Caco-2 (cell line): ENCODE measurements at regions of chr1 and their contacts with region 1.

Region 1: GRCh38 chr1:184051485-184052193 is at the start of gene TSEN15:
- DNase-seq: peak; percentile 88 to 89
- H3K4me3 ChIP-seq: peak within 1 kb of the TSS; percentile 86
- H3K4me3 Mint-ChIP-seq: peak within 1 kb of the TSS; percentile 88
- H3K27ac Mint-ChIP-seq: peak within 1 kb of the TSS; percentile 100
- H3K4me1 ChIP-seq: peaks cover 19% of the 10 kb centered on the region
- H3K4me1 Mint-ChIP-seq: peaks cover 31% of the 10 kb centered on the region
- H3K27me3 ChIP-seq: no peaks in the 10 kb centered on the region
- H3K27me3 Mint-ChIP-seq: no peaks in the 10 kb centered on the region
- CTCF ChIP-seq: no peak
- total RNA-seq, gene TSEN15: 62.7 and 71.4 TPM in 2 replicates

Region 2: GRCh38 chr1:183635606-183636333 is 415.9 kb before region 1 on chr1 and contains the start of gene ARPC5:
- CTCF ChIA-PET with region 1: interaction called, 3 read pairs
- POLR2A ChIA-PET with region 1: interaction called, 3 read pairs
- intact Hi-C with region 1: loop called (anchors 10 kb)
- DNase-seq: peak; percentile 96 to 97
- H3K4me3 ChIP-seq: peak within 1 kb of the TSS; percentile 78
- H3K4me3 Mint-ChIP-seq: peak within 1 kb of the TSS; percentile 91
- H3K27ac Mint-ChIP-seq: peak within 1 kb of the TSS; percentile 90
- H3K4me1 ChIP-seq: peaks cover 41% of the 10 kb centered on the region
- H3K4me1 Mint-ChIP-seq: peaks cover 16% of the 10 kb centered on the region
- H3K27me3 ChIP-seq: no peaks in the 10 kb centered on the region
- H3K27me3 Mint-ChIP-seq: no peaks in the 10 kb centered on the region
- CTCF ChIP-seq: no peak
- total RNA-seq, gene ARPC5: 123 and 135 TPM in 2 replicates

Region 3: GRCh38 chr1:183783342-183783741 is 268.3 kb before region 1 on chr1:
- CTCF ChIA-PET with region 1: no interaction called
- POLR2A ChIA-PET with region 1: no interaction called
- intact Hi-C with region 1: no loop called
- DNase-seq: no peak
- H3K4me3 ChIP-seq: no peak overlapping the region
- H3K4me3 Mint-ChIP-seq: no peak overlapping the region
- H3K27ac Mint-ChIP-seq: no peak overlapping the region
- H3K4me1 ChIP-seq: no peaks in the 10 kb centered on the region
- H3K4me1 Mint-ChIP-seq: peaks cover 25% of the 10 kb centered on the region
- H3K27me3 ChIP-seq: no peaks in the 10 kb centered on the region
- H3K27me3 Mint-ChIP-seq: no peaks in the 10 kb centered on the region
- CTCF ChIP-seq: no peak

Region 4: GRCh38 chr1:183821889-183822611 is 229.6 kb before region 1 on chr1:
- CTCF ChIA-PET with region 1: no interaction called
- POLR2A ChIA-PET with region 1: no interaction called
- intact Hi-C with region 1: loop called (anchors 10 kb)
- DNase-seq: no peak
- H3K4me3 ChIP-seq: no peak overlapping the region
- H3K4me3 Mint-ChIP-seq: no peak overlapping the region
- H3K27ac Mint-ChIP-seq: no peak overlapping the region
- H3K4me1 ChIP-seq: peaks cover 26% of the 10 kb centered on the region
- H3K4me1 Mint-ChIP-seq: peaks cover 22% of the 10 kb centered on the region
- H3K27me3 ChIP-seq: no peaks in the 10 kb centered on the region
- H3K27me3 Mint-ChIP-seq: no peaks in the 10 kb centered on the region
- CTCF ChIP-seq: no peak

Region 5: DNA sequence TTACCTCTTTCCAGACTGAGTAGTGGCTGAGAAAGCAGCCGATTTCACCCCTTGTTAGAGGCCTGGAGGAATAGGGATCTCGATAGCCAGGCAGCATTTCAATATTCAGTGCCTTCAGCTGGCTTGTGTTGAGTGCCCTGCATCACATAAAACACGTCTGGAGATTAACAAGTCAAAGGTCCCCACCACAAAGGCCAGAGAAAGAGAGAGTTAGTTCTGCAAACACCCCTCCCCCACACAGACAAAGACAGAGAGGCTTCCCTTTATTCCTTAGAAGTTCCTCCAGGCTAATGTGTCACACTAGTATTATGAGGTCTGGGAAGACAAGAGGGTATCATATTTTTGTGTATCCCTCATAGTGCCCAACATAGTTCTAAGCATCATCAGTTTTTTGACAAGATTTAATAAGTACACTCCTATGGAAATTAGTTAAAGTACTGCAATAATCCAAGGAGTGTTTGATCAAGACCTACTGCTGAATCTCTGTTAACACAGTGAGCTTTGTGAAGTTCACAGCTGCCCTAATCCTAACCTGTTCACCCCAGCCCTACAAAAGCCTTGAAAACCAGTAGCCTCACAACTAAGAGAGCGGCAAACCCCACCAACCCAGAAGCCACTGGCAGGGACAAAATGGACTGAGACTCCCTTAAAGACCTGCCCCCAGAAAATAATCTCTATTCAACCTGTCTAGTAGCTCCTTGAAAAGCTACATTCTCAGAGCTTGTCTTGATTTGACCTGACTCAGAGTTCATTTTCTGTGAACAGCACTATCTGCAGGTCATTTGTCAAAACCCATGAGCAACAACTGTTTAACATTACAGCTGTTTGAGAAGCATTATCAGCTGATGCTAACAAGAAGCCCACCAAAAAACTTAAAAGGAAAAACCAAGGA is 106.0 kb before region 1 on chr1:
- CTCF ChIA-PET with region 1: no interaction called
- POLR2A ChIA-PET with region 1: no interaction called
- intact Hi-C with region 1: loop called (anchors 5 kb)
- DNase-seq: peak; percentile 56 to 65
- H3K4me3 ChIP-seq: no peak overlapping the region
- H3K4me3 Mint-ChIP-seq: peak overlapping the region; percentile 12
- H3K27ac Mint-ChIP-seq: peak overlapping the region; percentile 68
- H3K4me1 ChIP-seq: peaks cover 20% of the 10 kb centered on the region
- H3K4me1 Mint-ChIP-seq: peaks cover 28% of the 10 kb centered on the region
- H3K27me3 ChIP-seq: no peaks in the 10 kb centered on the region
- H3K27me3 Mint-ChIP-seq: no peaks in the 10 kb centered on the region
- CTCF ChIP-seq: no peak

Region 6: DNA sequence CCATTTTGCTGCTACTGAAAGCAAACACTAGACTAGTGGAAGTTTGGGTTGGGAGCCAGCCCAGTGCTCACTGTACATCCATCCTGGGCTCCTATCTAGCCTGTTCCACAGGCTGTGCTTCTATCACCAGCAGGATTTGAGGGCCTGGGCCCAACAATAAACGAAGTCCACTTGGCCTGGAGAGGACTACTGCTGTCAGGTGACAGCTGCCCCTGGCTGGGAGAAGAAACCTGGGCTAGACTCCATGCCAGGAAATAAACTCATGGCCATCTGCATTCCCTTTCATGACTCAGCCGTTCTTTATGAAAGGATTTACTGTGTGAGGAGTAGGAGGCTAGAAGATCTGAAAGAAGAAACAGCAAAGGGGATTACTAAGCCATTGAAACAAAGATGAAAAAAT is 49.6 kb before region 1 on chr1:
- CTCF ChIA-PET with region 1: no interaction called
- POLR2A ChIA-PET with region 1: interaction called, 19 read pairs
- intact Hi-C with region 1: no loop called
- DNase-seq: peak in 1 of 2 experiments; percentile 39
- H3K4me3 ChIP-seq: no peak overlapping the region
- H3K4me3 Mint-ChIP-seq: no peak overlapping the region
- H3K27ac Mint-ChIP-seq: peak overlapping the region; percentile 36
- H3K4me1 ChIP-seq: peaks cover 25% of the 10 kb centered on the region
- H3K4me1 Mint-ChIP-seq: peaks cover 16% of the 10 kb centered on the region
- H3K27me3 ChIP-seq: no peaks in the 10 kb centered on the region
- H3K27me3 Mint-ChIP-seq: no peaks in the 10 kb centered on the region
- CTCF ChIP-seq: no peak